Activated T-helper 1 cell treated with anti-CD3 and anti-CD28 coated beads, Interleukin-12 subunit alpha, Interleukin-12 subunit beta, Interleukin-2, Interleukin-4 antibody, amounts not matched to agents 30 ng/mL and 10 ng/mL and 1 ng/mL, durations not matched to agents 14 hours and 24 hours and 36 hours (primary cell): ENCODE measurements at regions of chr9 and their contacts with region 1.

Region 1: GRCh38 chr9:28471261-28471660 is 898.0 kb upstream of the C9orf72 start:
- DNase-seq: no peak
- H3K4me3 Mint-ChIP-seq: no peak overlapping the region
- H3K27ac Mint-ChIP-seq: no peak overlapping the region
- H3K4me1 Mint-ChIP-seq: no peaks in the 10 kb centered on the region
- H3K27me3 Mint-ChIP-seq: no peaks in the 10 kb centered on the region

Region 2: GRCh38 chr9:28410411-28410810 is 60.9 kb before region 1 on chr9:
- intact Hi-C with region 1: loop called (anchors 10 kb)
- DNase-seq: no peak
- H3K4me3 Mint-ChIP-seq: no peak overlapping the region
- H3K27ac Mint-ChIP-seq: no peak overlapping the region
- H3K4me1 Mint-ChIP-seq: no peaks in the 10 kb centered on the region
- H3K27me3 Mint-ChIP-seq: no peaks in the 10 kb centered on the region